Stomach (tissue), 19 donors: ENCODE measurements at regions of chr3 and their contacts with region 1.

Region 1: DNA sequence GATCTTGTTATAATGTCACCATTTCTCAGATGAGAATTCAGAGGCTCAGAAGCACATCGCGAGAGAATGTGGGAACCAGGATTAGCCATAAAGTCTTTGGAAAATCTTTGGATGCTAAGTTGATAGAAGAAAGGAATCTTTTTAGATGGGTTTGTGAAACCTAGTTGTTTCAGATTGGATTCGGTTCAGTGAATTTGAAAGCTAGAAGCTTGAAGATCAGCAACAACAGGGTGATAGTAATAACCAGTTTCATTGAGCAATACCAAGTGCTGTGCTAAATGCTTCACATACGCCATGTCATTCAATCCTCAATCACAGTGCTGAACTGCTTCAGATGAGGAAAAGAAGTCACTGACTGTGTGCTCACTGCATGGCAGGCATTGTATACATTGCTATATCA is 47.4 kb upstream of the MITF start:
- DNase-seq: no peak
- H3K4me3 ChIP-seq: no peak overlapping the region
- H3K27ac ChIP-seq: no peak overlapping the region
- H3K4me1 ChIP-seq: peaks cover 0 to 6% (median 2%) of the 10 kb centered on the region in 4 donors
- H3K27me3 ChIP-seq: no peaks in the 10 kb centered on the region
- CTCF ChIP-seq: no peak
- EP300 ChIP-seq: no peak
- POLR2A ChIP-seq: no peak

Region 2: GRCh38 chr3:69250014-69250413 is 441.8 kb before region 1 on chr3:
- intact Hi-C with region 1: no loop called
- DNase-seq: peak; percentile 66 to 91
- H3K4me3 ChIP-seq: peak overlapping the region; percentile 26 to 36 (median 34)
- H3K27ac ChIP-seq: peak overlapping the region in 3 of 5 donors; percentile 34 to 62 (median 39)
- H3K4me1 ChIP-seq: no peaks in the 10 kb centered on the region
- H3K27me3 ChIP-seq: no peaks in the 10 kb centered on the region
- CTCF ChIP-seq: no peak
- EP300 ChIP-seq: no peak
- POLR2A ChIP-seq: no peak

Region 3: DNA sequence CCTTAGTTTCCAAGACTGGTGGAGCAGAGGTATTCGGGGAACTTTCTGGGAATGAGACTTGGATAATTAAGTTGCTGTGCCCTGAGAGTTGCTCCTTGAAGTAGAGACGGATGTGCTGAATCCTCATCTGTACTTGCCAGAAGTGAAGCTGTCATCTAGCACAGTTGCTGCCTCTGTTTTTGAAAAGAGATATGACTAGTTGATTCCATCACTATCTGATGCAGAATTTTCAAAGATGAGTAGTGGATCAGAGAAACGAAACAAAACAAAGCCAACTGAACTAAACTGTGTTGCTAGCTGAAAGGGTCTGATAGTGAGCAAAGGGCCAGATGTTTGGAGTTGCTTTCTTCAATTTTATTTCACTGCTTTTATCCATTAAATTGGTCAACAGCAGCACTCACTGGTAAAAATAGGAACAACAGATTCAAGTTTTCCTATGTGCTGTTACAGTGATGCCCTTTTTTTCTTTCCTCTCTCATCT is 100.1 kb after region 1 on chr3:
- intact Hi-C with region 1: loop called (anchors 10 kb)
- DNase-seq: peak in 1 of 2 donors; percentile 63
- H3K4me3 ChIP-seq: no peak overlapping the region
- H3K27ac ChIP-seq: peak overlapping the region in 3 of 5 donors; percentile 2 to 40 (median 3)
- H3K4me1 ChIP-seq: peaks cover 0 to 27% (median 11%) of the 10 kb centered on the region in 4 donors
- H3K27me3 ChIP-seq: no peaks in the 10 kb centered on the region
- CTCF ChIP-seq: peak in 2 of 7 experiments; percentile 41 to 43
- EP300 ChIP-seq: no peak
- POLR2A ChIP-seq: no peak

Region 4: GRCh38 chr3:69948246-69948862 is 256.5 kb after region 1 on chr3:
- intact Hi-C with region 1: loop called (anchors 10 kb)
- DNase-seq: peak in 1 of 2 donors; percentile 72
- H3K4me3 ChIP-seq: no peak overlapping the region
- H3K27ac ChIP-seq: no peak overlapping the region
- H3K4me1 ChIP-seq: peaks cover 0 to 9% (median 4%) of the 10 kb centered on the region in 4 donors
- H3K27me3 ChIP-seq: no peaks in the 10 kb centered on the region
- CTCF ChIP-seq: peak in 5 of 7 experiments; percentile 17 to 58 (median 40)
- EP300 ChIP-seq: no peak
- POLR2A ChIP-seq: no peak